Stomach (tissue), 19 donors: ENCODE measurements at regions of chr6 and their contacts with region 1.

Region 1: GRCh38 chr6:63764318-63764916 is 128.8 kb downstream of the PHF3 start:
- DNase-seq: peak in 1 of 2 donors; percentile 76
- H3K4me3 ChIP-seq: no peak overlapping the region
- H3K27ac ChIP-seq: no peak overlapping the region
- H3K4me1 ChIP-seq: no peaks in the 10 kb centered on the region
- H3K27me3 ChIP-seq: no peaks in the 10 kb centered on the region
- CTCF ChIP-seq: peak in 4 of 7 experiments; percentile 32 to 84 (median 52)
- EP300 ChIP-seq: no peak
- POLR2A ChIP-seq: no peak

Region 2: DNA sequence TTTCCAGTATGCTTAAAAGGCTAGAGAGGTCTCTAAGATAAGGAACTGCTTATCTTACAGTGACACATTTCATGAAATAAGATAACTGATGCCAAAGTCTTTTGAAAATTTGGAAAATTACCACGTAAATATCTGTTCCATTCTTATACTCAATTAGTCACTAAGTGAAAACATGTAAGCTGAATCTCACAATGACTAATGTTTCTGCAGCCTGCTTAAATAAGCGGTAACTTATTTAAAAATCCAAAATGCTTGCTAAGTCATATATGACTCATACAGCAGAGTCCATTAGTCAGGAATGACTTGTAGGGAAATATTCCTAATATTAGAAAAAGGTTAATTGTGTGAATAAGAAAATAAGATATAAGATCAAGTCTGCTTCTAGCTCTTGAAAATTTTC is 416.8 kb before region 1 on chr6:
- intact Hi-C with region 1: loop called (anchors 10 kb)
- DNase-seq: no peak
- H3K4me3 ChIP-seq: no peak overlapping the region
- H3K27ac ChIP-seq: no peak overlapping the region
- H3K4me1 ChIP-seq: peaks cover 5 to 32% (median 14%) of the 10 kb centered on the region in 4 donors
- H3K27me3 ChIP-seq: no peaks in the 10 kb centered on the region
- CTCF ChIP-seq: no peak
- EP300 ChIP-seq: no peak
- POLR2A ChIP-seq: no peak

Region 3: DNA sequence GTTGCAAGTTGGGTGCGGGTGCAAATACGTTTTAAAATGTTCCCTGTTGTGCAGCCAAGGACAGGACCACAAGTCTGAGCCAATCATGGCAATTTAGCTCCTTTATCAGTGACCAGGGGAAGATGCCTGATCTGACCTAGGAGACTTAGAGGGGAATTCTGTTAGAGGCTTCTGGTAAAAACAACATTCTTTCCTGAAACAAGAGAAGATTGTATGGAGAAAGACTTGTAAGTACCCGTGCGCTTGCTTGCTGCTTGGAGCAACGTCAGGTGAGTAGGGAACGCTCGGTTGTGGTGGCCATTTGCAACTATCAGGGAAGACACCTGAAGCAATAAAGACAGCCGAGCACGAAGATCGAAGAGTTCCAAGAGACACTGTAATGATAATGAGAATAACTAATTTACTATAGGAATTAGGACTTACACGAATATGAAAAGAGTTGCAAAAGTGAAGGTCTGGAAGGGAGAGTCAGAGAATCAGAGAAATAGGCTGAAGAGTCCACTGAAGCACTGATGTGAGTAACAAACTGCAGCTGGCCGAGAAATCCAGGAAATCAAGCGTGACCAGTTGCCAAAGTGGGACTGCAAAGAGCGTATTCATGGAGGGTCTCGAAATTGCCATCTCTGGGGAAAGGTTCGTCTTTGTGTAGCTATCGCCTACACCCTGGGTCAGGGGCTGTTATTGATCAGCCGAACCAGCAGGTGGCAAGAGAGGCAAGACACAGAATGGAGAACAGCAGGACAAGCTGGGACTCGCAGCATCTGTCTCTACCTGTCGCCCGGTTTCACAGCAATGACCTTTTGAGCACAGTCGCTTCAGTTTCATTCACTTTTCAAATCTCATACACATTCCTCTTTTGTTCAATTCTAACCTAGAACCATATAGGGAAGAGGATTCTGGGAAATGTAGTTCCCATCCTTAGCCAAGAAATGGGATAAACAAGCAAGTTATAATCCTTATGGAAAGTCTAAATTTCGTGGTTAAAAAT is 166.1 kb before region 1 on chr6:
- intact Hi-C with region 1: loop called (anchors 5 kb)
- DNase-seq: peak; percentile 72 to 91
- H3K4me3 ChIP-seq: peak overlapping the region; percentile 45 to 57 (median 50)
- H3K27ac ChIP-seq: peak overlapping the region in 3 of 5 donors; percentile 10 to 69 (median 56)
- H3K4me1 ChIP-seq: peaks cover 0 to 17% (median 10%) of the 10 kb centered on the region in 4 donors
- H3K27me3 ChIP-seq: no peaks in the 10 kb centered on the region
- CTCF ChIP-seq: peak in 5 of 7 experiments; percentile 72 to 93 (median 83)
- EP300 ChIP-seq: no peak
- POLR2A ChIP-seq: no peak